ENCODE measurements at regions of chr12 and their contacts with region 1.

Region 1: DNA sequence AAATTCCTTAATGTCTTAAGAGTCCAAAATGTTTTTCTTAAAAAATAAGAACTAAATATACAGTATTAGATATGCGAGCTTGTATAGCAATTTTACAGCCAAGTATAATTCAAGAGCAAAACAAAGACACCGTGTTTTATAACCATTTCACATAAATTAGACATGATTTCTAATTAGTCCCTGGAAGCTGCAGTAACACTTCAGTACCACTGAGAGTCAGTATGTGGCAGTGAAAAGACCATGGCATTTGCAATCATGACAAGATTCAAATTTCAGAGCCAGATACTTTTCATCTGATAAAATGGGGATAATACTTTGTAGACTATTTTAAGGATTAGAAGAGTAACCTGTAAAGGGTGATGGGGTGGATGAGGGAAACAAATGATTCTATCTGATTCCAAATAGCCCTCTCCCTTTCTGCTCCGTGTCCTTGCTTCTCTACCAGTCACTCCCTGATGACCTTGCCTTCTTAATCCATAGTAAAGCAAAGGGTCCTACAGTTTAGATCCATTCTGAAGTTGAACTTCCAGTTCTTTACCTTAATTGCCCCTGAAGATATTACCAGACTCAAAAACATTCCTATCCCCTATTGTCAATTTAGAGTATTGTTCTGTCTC is 145.4 kb upstream of the ABCD2 start:
- DNase-seq: peak; percentile 9
- H3K4me3 ChIP-seq: no peak overlapping the region
- H3K27ac ChIP-seq: no peak overlapping the region
- H3K4me1 ChIP-seq: no peaks in the 10 kb centered on the region
- H3K27me3 ChIP-seq: no peaks in the 10 kb centered on the region
- CTCF ChIP-seq: peak; percentile 89 to 95

Region 2: GRCh38 chr12:39587225-39587624 is 177.8 kb before region 1 on chr12:
- CTCF ChIA-PET with region 1: no interaction called
- dilution Hi-C with region 1: no loop called
- in situ Hi-C with region 1: no loop called
- intact Hi-C with region 1: loop called (anchors 1 kb)
- DNase-seq: peak; percentile 20
- H3K4me3 ChIP-seq: no peak overlapping the region
- H3K27ac ChIP-seq: no peak overlapping the region
- H3K4me1 ChIP-seq: no peaks in the 10 kb centered on the region
- H3K27me3 ChIP-seq: no peaks in the 10 kb centered on the region
- CTCF ChIP-seq: peak; percentile 48 to 59

Region 3: DNA sequence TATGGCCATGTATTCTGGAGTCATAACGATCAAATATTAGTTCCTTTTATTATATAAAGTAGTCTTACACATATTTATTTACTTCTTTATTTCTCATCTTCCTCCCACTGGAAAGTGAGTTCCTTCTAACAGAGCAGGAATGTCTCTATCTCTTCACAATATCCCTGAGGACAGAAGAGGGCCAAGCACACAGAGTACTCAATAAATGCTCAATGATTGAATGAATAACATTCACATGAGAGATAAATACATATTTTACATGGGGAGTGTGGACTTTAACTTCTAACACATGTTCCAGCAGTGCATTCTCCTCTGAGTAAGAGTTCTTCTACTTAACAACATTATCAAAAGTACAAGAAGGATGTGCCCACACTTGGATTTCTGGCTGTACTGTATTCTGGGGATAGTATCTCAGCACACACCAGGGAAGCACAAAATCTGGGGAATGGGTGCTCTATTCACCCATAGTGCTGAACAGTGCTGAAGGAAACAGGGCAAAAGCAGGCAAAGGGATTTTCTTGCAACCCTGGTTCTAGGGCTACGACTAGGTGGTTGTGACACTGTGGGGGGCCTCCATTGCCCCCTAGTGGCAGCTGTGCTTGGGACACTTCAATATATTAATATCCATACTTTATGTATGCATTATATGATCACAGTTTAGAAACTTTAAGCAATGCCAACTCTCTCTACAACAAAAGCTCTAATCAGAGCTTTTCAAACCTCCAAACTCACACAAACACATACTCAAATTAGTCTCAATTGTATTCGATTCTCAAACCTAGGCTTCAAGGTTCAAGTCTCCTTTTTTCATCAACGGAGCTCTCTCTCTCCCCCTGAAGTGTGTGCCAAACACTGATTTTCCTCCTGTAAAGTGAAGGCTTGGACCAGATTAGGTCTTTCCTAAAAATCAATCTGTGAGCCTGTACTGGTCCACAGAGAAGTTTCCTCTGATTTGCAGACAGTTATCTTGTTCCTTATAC is 225.4 kb after region 1 on chr12:
- CTCF ChIA-PET with region 1: no interaction called
- dilution Hi-C with region 1: no loop called
- in situ Hi-C with region 1: loop called (anchors 10 to 25 kb)
- intact Hi-C with region 1: loop called (anchors 1 kb)
- DNase-seq: peak; percentile 19
- H3K4me3 ChIP-seq: no peak overlapping the region
- H3K27ac ChIP-seq: no peak overlapping the region
- H3K4me1 ChIP-seq: peaks cover 3% of the 10 kb centered on the region
- H3K27me3 ChIP-seq: no peaks in the 10 kb centered on the region
- CTCF ChIP-seq: peak; percentile 83 to 88

Region 4: GRCh38 chr12:40107098-40107802 is 342.2 kb after region 1 on chr12:
- CTCF ChIA-PET with region 1: interaction called, 5 read pairs
- dilution Hi-C with region 1: loop called (anchors 25 kb)
- in situ Hi-C with region 1: loop called (anchors 10 to 25 kb)
- intact Hi-C with region 1: loop called (anchors 1 kb)
- DNase-seq: peak; percentile 67
- H3K4me3 ChIP-seq: peak overlapping the region; percentile 38 to 88 (median 54)
- H3K27ac ChIP-seq: no peak overlapping the region
- H3K4me1 ChIP-seq: peaks cover 18% of the 10 kb centered on the region
- H3K27me3 ChIP-seq: no peaks in the 10 kb centered on the region
- CTCF ChIP-seq: peak; percentile 85 to 89

Region 5: GRCh38 chr12:40117818-40118217 is 352.8 kb after region 1 on chr12:
- CTCF ChIA-PET with region 1: no interaction called
- dilution Hi-C with region 1: loop called (anchors 25 kb)
- in situ Hi-C with region 1: loop called (anchors 10 to 25 kb)
- intact Hi-C with region 1: no loop called
- DNase-seq: no peak
- H3K4me3 ChIP-seq: no peak overlapping the region
- H3K27ac ChIP-seq: no peak overlapping the region
- H3K4me1 ChIP-seq: no peaks in the 10 kb centered on the region
- H3K27me3 ChIP-seq: peaks cover 1% of the 10 kb centered on the region
- CTCF ChIP-seq: no peak

Measured in mammary epithelial cell (primary cell).